GM12878 (cell line): ENCODE measurements at regions of chrX and their contacts with region 1.

Region 1: GRCh38 chrX:95071052-95071451 is 1397.0 kb downstream of the FAM133A start:
- DNase-seq: no peak
- ATAC-seq: no peak
- H3K4me3 ChIP-seq: no peak overlapping the region
- H3K27ac ChIP-seq: no peak overlapping the region
- H3K4me1 ChIP-seq: no peaks in the 10 kb centered on the region
- H3K27me3 ChIP-seq: no peaks in the 10 kb centered on the region
- CTCF ChIP-seq: no peak; a peak in 1 of 6 replicates
- EP300 ChIP-seq: no peak
- POLR2A ChIP-seq: no peak
- RAD21 ChIP-seq: no peak

Region 2: GRCh38 chrX:95058815-95059214 is 12.2 kb before region 1 on chrX:
- CTCF ChIA-PET with region 1: interaction called, 33 read pairs
- POLR2A ChIA-PET with region 1: interaction called, 7 read pairs
- RAD21 ChIA-PET with region 1: interaction called, 18 read pairs
- SMC1A ChIA-PET with region 1: interaction called, 54 read pairs
- in situ Hi-C with region 1: no loop called
- intact Hi-C with region 1: no loop called
- DNase-seq: no peak
- ATAC-seq: no peak
- H3K4me3 ChIP-seq: no peak overlapping the region
- H3K27ac ChIP-seq: no peak overlapping the region
- H3K4me1 ChIP-seq: no peaks in the 10 kb centered on the region
- H3K27me3 ChIP-seq: no peaks in the 10 kb centered on the region
- CTCF ChIP-seq: no peak
- EP300 ChIP-seq: no peak
- POLR2A ChIP-seq: no peak
- RAD21 ChIP-seq: no peak